ENCODE measurements at regions of chr1 and their contacts with region 1.

Region 1: DNA sequence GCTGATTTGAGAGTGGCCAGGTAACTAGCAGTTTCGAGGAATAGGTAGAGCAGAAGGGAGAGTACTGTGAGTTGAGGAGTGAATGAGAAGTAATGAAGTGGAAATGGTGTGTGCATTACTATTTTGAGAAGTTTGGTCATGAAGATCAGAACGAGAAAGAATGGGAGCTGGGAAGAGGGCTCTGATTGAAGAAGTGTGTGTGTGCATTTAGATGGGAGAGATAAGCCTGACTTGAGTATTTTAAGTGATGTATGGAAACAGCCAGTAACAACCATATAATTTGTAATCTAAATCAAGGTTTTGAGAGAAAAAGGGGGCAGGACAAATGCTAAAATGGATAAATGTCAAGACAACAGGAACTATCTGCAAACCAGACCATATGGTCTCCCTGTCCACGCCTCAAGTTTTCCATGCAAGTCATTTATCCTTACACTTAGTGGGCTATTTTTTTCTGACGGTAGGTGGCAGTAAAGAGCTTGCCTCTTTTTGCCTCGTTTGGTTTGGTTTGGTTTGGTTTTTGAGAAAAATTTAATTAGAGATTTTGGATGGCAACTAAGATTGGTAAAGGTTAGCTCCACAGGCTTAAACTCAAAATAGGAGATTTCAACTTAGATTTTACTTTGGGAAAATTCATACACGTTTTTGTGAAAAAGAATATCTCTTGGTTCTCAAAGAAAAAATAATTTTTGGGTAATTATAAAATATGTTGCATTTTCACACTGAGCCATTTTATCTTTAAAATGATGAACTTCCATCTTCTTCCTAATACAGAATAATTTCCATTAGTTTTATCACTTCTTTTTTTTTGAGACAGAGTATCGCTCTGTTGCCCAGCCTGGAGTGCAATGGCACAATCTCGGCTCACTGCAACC is 9.5 kb upstream of the B3GALNT2 start:
- DNase-seq: peak; percentile 66
- H3K4me3 ChIP-seq: no peak overlapping the region
- H3K27ac ChIP-seq: no peak overlapping the region
- H3K4me1 ChIP-seq: no peaks in the 10 kb centered on the region
- H3K27me3 ChIP-seq: no peaks in the 10 kb centered on the region
- CTCF ChIP-seq: peak; percentile 76

Region 2: GRCh38 chr1:235601104-235601503 is 87.4 kb after region 1 on chr1:
- CTCF ChIA-PET with region 1: interaction called, 8 read pairs
- POLR2A ChIA-PET with region 1: no interaction called
- intact Hi-C with region 1: loop called (anchors 10 kb)
- DNase-seq: peak; percentile 22
- H3K4me3 ChIP-seq: no peak overlapping the region
- H3K27ac ChIP-seq: no peak overlapping the region
- H3K4me1 ChIP-seq: no peaks in the 10 kb centered on the region
- H3K27me3 ChIP-seq: no peaks in the 10 kb centered on the region
- CTCF ChIP-seq: peak; percentile 54

Region 3: DNA sequence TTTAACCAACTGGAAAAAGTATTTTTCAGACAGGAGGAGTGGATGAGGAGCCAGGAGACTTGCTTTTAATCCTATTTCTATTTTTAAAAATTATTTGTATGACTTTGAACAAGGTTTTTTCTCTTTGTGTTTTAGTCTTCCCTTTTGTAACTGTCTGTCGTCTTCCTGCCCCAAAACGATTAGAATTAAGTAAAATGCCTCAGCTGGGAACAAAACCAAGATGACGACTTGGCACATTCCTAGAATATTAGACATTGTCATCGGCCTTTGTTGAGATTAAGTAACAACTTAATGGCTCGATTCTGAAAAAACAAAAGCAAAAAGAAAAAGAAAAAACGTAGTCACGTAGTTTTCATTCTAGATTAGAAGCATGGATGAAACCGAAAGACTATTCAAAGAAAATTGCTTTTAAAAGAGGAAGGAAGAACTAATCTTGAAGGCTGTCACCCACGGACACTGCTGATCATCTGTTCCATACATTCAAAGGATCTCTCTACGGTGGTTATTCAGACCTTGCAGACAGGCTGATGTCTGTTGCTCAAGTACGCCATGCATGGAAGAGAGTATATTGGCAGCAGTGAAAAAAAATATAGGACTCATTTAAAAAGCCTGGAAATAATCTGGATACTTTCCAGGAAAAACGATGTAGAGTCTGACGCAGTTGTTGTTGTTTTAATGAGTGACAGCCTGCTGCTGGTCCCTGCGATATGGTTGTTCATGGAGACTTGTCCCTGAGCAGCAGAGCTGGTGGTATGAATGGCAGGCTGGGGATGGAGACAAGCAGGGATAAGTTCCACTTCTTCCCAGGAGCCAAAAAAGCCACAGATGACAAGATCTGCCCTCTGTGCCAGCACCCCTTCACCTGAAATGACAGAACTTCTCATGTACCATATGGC is 119.0 kb after region 1 on chr1:
- CTCF ChIA-PET with region 1: no interaction called
- POLR2A ChIA-PET with region 1: no interaction called
- intact Hi-C with region 1: loop called (anchors 10 kb)
- DNase-seq: peak; percentile 45
- H3K4me3 ChIP-seq: peak overlapping the region; percentile 30
- H3K27ac ChIP-seq: peak overlapping the region; percentile 47
- H3K4me1 ChIP-seq: peaks cover 6% of the 10 kb centered on the region
- H3K27me3 ChIP-seq: no peaks in the 10 kb centered on the region
- CTCF ChIP-seq: no peak

Region 4: DNA sequence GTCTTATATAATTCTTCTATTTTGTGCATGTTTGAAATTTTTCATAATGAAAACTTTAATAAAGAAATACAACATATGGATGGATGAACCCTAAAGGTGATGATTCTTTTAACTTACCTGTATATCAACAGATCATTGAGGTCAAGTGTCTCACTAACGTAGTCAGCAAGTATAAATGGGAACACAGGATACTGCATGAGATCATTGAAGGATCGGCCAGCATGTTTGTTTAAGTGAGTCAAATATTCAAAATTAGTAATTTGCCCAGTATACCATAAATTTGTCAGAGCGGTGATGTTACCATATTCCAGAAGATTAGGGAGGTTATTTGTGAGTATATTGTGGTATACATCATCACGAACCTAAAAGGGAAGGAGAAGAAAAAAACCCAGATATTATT is 206.8 kb after region 1 on chr1:
- CTCF ChIA-PET with region 1: no interaction called
- POLR2A ChIA-PET with region 1: no interaction called
- intact Hi-C with region 1: loop called (anchors 5 kb)
- DNase-seq: no peak
- H3K4me3 ChIP-seq: no peak overlapping the region
- H3K27ac ChIP-seq: no peak overlapping the region
- H3K4me1 ChIP-seq: no peaks in the 10 kb centered on the region
- H3K27me3 ChIP-seq: no peaks in the 10 kb centered on the region
- CTCF ChIP-seq: no peak

Region 5: GRCh38 chr1:235730007-235730406 is 216.3 kb after region 1 on chr1:
- CTCF ChIA-PET with region 1: no interaction called
- POLR2A ChIA-PET with region 1: no interaction called
- intact Hi-C with region 1: loop called (anchors 2 kb)
- DNase-seq: no peak
- H3K4me3 ChIP-seq: no peak overlapping the region
- H3K27ac ChIP-seq: no peak overlapping the region
- H3K4me1 ChIP-seq: no peaks in the 10 kb centered on the region
- H3K27me3 ChIP-seq: no peaks in the 10 kb centered on the region
- CTCF ChIP-seq: no peak

Region 6: DNA sequence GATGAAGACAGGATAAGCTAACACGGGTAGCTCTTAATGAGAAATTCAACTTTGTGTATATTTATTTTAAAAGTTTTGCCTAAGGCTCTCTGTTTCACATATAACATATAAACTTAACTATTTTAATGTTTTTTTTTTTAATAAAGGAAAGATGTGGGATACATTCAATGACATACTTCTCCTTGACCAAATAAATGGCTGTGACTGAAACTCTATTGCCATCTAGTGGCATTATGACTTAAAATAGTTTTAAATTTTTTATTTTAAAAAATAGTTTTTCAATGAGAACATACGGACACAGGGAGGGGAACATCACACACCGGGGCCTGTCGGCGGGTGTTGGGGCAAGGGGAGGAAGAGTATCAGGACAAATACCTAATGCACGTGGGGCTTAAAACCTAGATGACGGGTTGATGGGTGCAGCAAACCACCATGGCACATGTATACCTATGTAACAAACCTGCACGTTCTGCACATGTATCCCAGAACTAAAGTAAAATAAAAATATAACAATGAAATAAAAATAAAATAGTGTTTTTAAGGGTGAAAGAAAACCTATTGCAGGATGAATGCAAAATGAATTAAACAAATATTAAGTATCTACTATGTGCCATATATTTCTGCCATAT is 269.5 kb after region 1 on chr1:
- CTCF ChIA-PET with region 1: no interaction called
- POLR2A ChIA-PET with region 1: no interaction called
- intact Hi-C with region 1: loop called (anchors 2 kb)
- DNase-seq: peak; percentile 42
- H3K4me3 ChIP-seq: no peak overlapping the region
- H3K27ac ChIP-seq: no peak overlapping the region
- H3K4me1 ChIP-seq: no peaks in the 10 kb centered on the region
- H3K27me3 ChIP-seq: no peaks in the 10 kb centered on the region
- CTCF ChIP-seq: peak; percentile 43; the same call in 1 of the 2 replicates

Region 7: DNA sequence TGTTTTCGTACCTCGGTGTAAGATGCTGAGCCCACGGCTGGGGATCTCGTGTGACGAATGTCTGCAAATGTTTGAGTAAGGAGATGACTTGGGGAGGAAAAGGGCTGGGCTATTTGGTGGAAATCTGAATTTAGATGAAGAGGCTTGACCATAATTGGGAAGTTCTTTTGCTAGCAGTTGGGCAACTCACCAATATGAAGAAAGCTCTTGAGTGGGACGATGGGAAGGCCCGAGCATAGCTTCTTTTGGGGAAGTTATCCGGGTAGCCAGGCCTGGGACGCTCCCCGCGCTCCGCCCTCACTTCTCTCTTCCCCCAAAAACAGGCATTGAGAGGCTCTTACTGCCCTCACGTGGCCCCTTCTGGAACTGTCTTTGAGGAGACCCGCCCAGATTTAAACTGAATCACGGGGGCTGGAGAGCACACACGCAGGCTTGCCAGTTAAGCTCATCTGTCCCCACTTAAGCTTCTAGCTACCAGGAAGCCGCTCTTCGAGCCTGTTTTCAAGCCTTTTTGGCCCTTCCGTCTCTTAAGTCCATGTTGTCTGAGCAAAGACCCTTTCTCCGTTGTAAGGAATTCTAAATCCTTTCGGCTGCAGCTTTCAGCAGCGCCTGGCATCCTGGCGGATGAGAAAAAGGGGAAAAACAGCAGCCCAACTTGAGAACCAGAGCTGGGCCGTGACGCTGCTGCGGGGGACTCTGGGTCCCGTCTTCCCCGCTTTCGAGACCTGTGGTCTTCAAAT is 458.0 kb after region 1 on chr1:
- CTCF ChIA-PET with region 1: no interaction called
- POLR2A ChIA-PET with region 1: no interaction called
- intact Hi-C with region 1: loop called (anchors 5 kb)
- DNase-seq: peak; percentile 89
- H3K4me3 ChIP-seq: peak overlapping the region; percentile 21
- H3K27ac ChIP-seq: no peak overlapping the region
- H3K4me1 ChIP-seq: no peaks in the 10 kb centered on the region
- H3K27me3 ChIP-seq: no peaks in the 10 kb centered on the region
- CTCF ChIP-seq: peak; percentile 70